ENCODE measurements at regions of chr7 and their contacts with region 1.

Region 1: DNA sequence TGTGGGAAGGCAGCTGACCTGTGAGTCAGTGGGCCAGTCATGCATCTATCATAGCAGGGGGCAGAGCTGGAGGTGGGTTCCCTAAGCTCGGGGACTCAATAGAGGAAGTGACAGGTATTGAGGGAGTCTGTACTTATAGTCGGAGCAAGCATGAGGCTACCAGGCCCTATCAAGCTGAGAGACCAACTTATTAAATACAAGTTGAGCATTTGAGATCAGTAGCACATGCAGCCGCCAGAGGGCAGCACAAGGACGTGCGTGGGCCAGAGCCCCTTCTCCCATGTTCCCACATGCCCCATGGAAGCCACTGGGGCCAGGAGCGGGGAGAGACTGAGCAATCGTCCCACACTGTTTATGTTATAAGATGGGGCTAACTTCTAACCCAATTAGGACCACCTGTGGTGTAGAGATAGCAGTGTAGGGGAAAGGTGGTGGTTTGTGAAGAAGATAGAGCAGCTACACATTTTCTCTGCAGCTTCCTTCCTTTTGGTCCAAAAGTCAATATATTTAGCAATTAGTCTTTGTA is 13.0 kb upstream of the STK31 start:
- DNase-seq: peak; percentile 55 to 85
- ATAC-seq: peak; percentile 95 to 99
- H3K4me3 ChIP-seq: no peak overlapping the region
- H3K27ac ChIP-seq: no peak overlapping the region
- H3K4me1 ChIP-seq: no peaks in the 10 kb centered on the region
- CTCF ChIP-seq: peak; percentile 71
- EP300 ChIP-seq: no peak
- POLR2A ChIP-seq: no peak
- RAD21 ChIP-seq: peak; percentile 58 to 75

Region 2: GRCh38 chr7:23685731-23686130 is 11.2 kb before region 1 on chr7:
- CTCF ChIA-PET with region 1: interaction called, 13 read pairs
- POLR2A ChIA-PET with region 1: no interaction called
- DNase-seq: peak in 1 of 2 experiments; percentile 22
- ATAC-seq: peak in 1 of 2 experiments; percentile 54; a peak in 2 of 6 replicates
- H3K4me3 ChIP-seq: no peak overlapping the region
- H3K27ac ChIP-seq: no peak overlapping the region
- H3K4me1 ChIP-seq: no peaks in the 10 kb centered on the region
- CTCF ChIP-seq: no peak
- EP300 ChIP-seq: no peak
- POLR2A ChIP-seq: no peak
- RAD21 ChIP-seq: no peak

Region 3: GRCh38 chr7:23712368-23713284 is 15.6 kb after region 1 on chr7:
- CTCF ChIA-PET with region 1: interaction called, 42 read pairs
- POLR2A ChIA-PET with region 1: no interaction called
- DNase-seq: peak; percentile 54 to 64
- ATAC-seq: peak; percentile 61 to 83; a peak in 3 of 6 replicates
- H3K4me3 ChIP-seq: no peak overlapping the region
- H3K27ac ChIP-seq: no peak overlapping the region
- H3K4me1 ChIP-seq: peaks cover 27% of the 10 kb centered on the region
- CTCF ChIP-seq: peak; percentile 96
- EP300 ChIP-seq: no peak
- POLR2A ChIP-seq: no peak
- RAD21 ChIP-seq: peak; percentile 90 to 95

Region 4: DNA sequence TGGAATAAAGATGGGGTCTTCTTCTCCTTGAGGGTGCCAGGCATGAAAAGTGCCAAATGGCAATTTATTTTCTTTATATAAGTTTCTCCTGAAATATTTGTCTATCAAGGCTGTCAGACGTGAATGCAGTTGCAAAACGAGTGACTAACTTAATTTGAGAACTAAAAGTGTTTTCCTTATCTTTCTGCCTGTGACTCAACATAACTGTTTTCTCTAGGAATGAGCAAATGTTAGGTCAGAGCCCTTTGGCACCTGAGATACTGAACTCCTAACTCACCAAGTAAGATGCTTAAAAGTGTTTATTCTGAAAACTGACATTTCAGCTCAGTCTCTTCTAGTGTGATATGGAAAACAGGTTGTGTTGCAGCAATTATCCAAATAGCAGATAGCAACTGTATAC is 210.0 kb after region 1 on chr7:
- CTCF ChIA-PET with region 1: no interaction called
- POLR2A ChIA-PET with region 1: no interaction called
- DNase-seq: no peak
- ATAC-seq: no peak
- H3K4me3 ChIP-seq: no peak overlapping the region
- H3K27ac ChIP-seq: no peak overlapping the region
- H3K4me1 ChIP-seq: no peaks in the 10 kb centered on the region
- CTCF ChIP-seq: no peak
- EP300 ChIP-seq: no peak
- POLR2A ChIP-seq: no peak
- RAD21 ChIP-seq: no peak